ENCODE measurements at regions of chr19 and their contacts with region 1.

Region 1: DNA sequence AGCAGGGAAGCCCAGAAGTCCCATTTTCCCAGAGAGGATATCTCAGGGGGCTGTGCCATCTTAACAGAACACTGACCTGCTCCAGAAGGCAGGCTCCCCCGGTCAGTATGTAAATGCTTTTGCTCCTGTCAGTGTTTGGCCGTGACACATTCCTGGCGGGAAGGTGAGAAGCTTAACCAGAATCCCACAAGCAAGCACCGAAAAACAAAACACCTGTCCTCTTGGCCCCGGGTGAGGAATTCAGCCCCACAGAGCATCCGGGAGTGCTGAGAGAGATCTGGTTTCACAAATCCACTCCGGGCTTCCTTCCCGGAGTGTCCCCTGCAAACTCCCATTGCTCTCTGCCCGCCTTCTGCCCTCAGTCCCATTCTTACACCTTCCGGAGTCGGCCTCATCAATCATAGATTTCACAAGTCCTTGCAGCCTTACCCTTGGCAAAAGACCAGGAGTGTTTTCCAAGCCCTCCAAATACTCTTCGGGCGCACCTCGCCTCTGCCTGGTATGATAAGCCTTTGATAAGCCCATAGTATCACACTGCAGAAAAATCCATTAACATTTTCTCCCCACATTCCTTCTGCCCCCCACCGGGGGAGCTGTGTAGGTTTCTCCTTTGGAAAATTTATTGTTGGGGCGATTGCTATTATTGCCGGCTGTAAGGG is 12.2 kb downstream of the TPM4 start:
- DNase-seq: no peak
- H3K4me3 ChIP-seq: no peak overlapping the region
- H3K4me3 Mint-ChIP-seq: peak overlapping the region; percentile 43
- H3K27ac Mint-ChIP-seq: peak overlapping the region; percentile 91
- H3K4me1 ChIP-seq: peaks cover 52% of the 10 kb centered on the region
- H3K4me1 Mint-ChIP-seq: peaks cover 28% of the 10 kb centered on the region
- H3K27me3 ChIP-seq: no peaks in the 10 kb centered on the region
- H3K27me3 Mint-ChIP-seq: no peaks in the 10 kb centered on the region
- CTCF ChIP-seq: peak; percentile 31 to 35

Region 2: DNA sequence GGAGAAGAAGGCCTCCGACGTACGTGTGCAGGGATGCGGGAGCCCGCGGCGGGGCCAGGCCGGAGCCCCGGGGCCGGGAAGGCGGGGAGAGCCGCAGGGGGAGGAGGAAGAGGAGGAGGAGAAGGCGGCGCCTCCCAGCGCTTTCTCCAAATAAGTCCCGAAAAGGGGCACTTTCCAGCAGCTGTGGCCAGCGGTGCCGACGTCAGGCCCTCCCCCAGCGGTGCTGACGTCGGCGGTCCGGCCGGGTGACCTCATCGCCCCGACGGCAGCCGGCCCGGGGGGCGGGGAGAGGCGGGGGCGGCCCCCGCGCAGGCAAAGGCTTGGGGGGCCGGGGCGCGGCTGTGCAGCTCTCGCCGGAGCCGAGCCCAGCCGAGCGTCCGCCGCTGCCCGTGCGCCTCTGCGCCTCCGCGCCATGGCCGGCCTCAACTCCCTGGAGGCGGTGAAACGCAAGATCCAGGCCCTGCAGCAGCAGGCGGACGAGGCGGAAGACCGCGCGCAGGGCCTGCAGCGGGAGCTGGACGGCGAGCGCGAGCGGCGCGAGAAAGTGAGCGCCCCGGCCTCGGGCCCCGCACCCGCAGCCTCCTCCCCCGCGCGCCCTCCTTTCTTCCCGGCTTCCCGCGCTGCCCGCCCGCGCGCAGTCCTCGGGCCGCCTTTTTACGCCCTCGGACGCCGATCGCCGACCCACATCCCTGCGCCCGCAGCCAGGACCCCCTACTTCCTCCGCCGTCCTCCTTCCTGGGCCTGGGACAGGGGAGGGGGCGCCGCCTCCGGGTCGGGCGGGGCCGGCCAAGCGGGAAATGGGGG is 12.1 kb before region 1 on chr19 and contains the start of gene TPM4:
- CTCF ChIA-PET with region 1: interaction called, 3 read pairs
- POLR2A ChIA-PET with region 1: interaction called, 8 read pairs
- intact Hi-C with region 1: loop called (anchors 1 kb)
- DNase-seq: peak; percentile 89 to 91
- H3K4me3 ChIP-seq: peak within 1 kb of the TSS; percentile 86
- H3K4me3 Mint-ChIP-seq: peak within 1 kb of the TSS; percentile 82
- H3K27ac Mint-ChIP-seq: peak within 1 kb of the TSS; percentile 90
- H3K4me1 ChIP-seq: peaks cover 21% of the 10 kb centered on the region
- H3K4me1 Mint-ChIP-seq: peaks cover 18% of the 10 kb centered on the region
- H3K27me3 ChIP-seq: no peaks in the 10 kb centered on the region
- H3K27me3 Mint-ChIP-seq: no peaks in the 10 kb centered on the region
- CTCF ChIP-seq: no peak
- total RNA-seq, gene TPM4: 368 and 392 TPM in 2 replicates

Region 3: GRCh38 chr19:16143399-16144245 is 55.1 kb after region 1 on chr19 and contains the start of gene HSH2D:
- CTCF ChIA-PET with region 1: no interaction called
- POLR2A ChIA-PET with region 1: no interaction called
- intact Hi-C with region 1: no loop called
- DNase-seq: peak; percentile 41 to 73
- H3K4me3 ChIP-seq: no peak within 1 kb of the TSS
- H3K4me3 Mint-ChIP-seq: no peak within 1 kb of the TSS
- H3K27ac Mint-ChIP-seq: peak within 1 kb of the TSS; percentile 28
- H3K4me1 ChIP-seq: peaks cover 5% of the 10 kb centered on the region; the same call in 1 of the 2 replicates
- H3K4me1 Mint-ChIP-seq: peaks cover 14% of the 10 kb centered on the region
- H3K27me3 ChIP-seq: no peaks in the 10 kb centered on the region
- H3K27me3 Mint-ChIP-seq: no peaks in the 10 kb centered on the region
- CTCF ChIP-seq: no peak
- total RNA-seq, gene HSH2D: 0.23 and 0.35 TPM in 2 replicates